Posterior cingulate gyrus (tissue), 11 donors: ENCODE measurements at regions of chr2 and their contacts with region 1.

Region 1: GRCh38 chr2:121736462-121737341 is at the start of gene NIFK:
- DNase-seq: peak; percentile 97 to 100 (median 98)

Region 2: DNA sequence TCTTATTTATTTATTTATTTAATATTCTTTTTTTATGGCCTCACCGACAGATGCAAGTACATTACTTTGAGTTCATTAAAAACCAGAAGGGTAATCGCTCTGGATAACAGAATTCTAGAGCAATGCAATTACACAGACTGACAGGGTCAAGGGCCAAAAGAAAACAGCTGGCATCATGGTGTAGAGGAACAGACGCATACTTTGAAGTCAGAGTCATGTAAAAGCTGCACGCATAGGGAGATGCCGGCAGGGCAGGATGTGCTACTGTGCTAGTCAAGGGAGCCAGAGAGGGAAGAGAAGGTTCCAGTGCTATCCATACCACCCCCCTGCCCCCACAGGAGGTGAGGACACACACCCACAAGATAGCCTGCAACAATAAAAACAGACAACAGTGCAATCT is 336.5 kb before region 1 on chr2:
- intact Hi-C with region 1: no loop called
- DNase-seq: no peak

Region 3: GRCh38 chr2:121755236-121756111 is 18.8 kb after region 1 on chr2 and contains the start of gene TSN:
- intact Hi-C with region 1: loop called (anchors 1 kb)
- DNase-seq: peak; percentile 95 to 99 (median 98)